HCT116 (cell line): ENCODE measurements at regions of chr10 and their contacts with region 1.

Region 1: GRCh38 chr10:112183329-112184051 is at the start of gene GPAM:
- DNase-seq: peak; percentile 84
- ATAC-seq: peak; percentile 96
- H3K4me3 ChIP-seq: peak within 1 kb of the TSS; percentile 75 to 84
- H3K27ac ChIP-seq: peak within 1 kb of the TSS; percentile 33; the same call in 1 of the 2 replicates
- H3K4me1 ChIP-seq: peaks cover 3 to 16% of the 10 kb centered on the region in 2 experiments; a peak in 3 of 4 replicates
- H3K27me3 ChIP-seq: no peaks in the 10 kb centered on the region
- CTCF ChIP-seq: no peak
- POLR2A ChIP-seq: peak; percentile 94
- RAD21 ChIP-seq: no peak
- total RNA-seq, gene GPAM: 19.3 TPM

Region 2: GRCh38 chr10:112307358-112308124 is 124.1 kb after region 1 on chr10:
- CTCF ChIA-PET with region 1: no interaction called
- POLR2A ChIA-PET with region 1: no interaction called
- RAD21 ChIA-PET with region 1: no interaction called
- intact Hi-C with region 1: loop called (anchors 5 kb)
- DNase-seq: peak; percentile 59
- ATAC-seq: peak; percentile 97
- H3K4me3 ChIP-seq: no peak overlapping the region
- H3K27ac ChIP-seq: no peak overlapping the region
- H3K4me1 ChIP-seq: peaks cover 0 to 6% of the 10 kb centered on the region in 2 experiments; a peak in 2 of 4 replicates
- H3K27me3 ChIP-seq: no peaks in the 10 kb centered on the region
- CTCF ChIP-seq: peak; percentile 80 to 100 (median 99); a peak in 5 of 6 replicates
- POLR2A ChIP-seq: no peak
- RAD21 ChIP-seq: peak; percentile 84

Region 3: DNA sequence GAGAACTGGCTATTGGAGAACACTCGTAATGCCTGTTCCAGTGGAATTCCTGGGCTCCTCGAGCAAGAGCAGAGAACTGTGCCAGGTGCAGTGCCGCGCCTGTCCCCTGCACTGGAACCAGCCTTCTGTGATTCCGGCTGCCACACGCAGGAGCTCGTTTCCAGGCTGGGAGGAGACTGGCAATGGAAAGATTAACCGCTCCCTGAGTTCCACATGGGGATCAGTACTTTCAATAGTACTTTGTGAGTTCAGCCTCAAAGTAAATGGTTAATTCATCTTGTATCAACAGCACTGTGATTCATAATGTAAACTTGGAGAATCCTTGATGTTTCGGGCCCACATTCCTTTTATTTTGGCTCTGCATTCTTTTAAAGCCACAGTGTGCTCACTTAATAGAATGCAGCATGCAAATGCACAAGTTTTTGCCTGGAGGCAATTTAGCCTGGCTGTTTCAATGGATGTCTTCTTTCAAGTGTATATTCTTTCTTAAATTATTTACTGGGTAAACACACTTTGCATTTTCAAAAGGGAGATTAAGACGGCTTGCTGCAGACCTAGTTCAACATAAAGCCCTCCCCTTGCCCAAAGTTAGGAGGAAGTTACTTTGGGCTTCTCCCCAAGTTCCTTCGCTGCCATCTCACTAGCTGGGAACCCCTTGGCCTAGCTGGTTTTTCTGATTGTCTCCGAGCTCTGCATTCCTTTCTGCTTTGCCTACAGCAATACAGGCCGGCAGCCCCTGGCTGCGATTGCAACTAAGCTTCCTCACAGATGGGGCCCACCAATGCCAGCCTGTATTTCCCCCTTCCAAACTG is 628.5 kb after region 1 on chr10:
- CTCF ChIA-PET with region 1: no interaction called
- POLR2A ChIA-PET with region 1: no interaction called
- RAD21 ChIA-PET with region 1: no interaction called
- intact Hi-C with region 1: no loop called
- DNase-seq: peak; percentile 91
- ATAC-seq: peak; percentile 84
- H3K4me3 ChIP-seq: peak overlapping the region; percentile 8 to 18; a peak in 2 of 4 replicates
- H3K27ac ChIP-seq: peak overlapping the region; percentile 78
- H3K4me1 ChIP-seq: peaks cover 77 to 87% of the 10 kb centered on the region in 2 experiments
- H3K27me3 ChIP-seq: no peaks in the 10 kb centered on the region
- CTCF ChIP-seq: no peak
- POLR2A ChIP-seq: no peak
- RAD21 ChIP-seq: peak; percentile 56